Activated CD4-positive, alpha-beta memory T cell treated with anti-CD3 and anti-CD28 coated beads for 36 hours (primary cell): ENCODE measurements at regions of chr11 and their contacts with region 1.

Region 1: GRCh38 chr11:14655435-14655834 is 11.8 kb downstream of the PDE3B start:
- DNase-seq: no peak
- H3K4me3 Mint-ChIP-seq: no peak overlapping the region
- H3K27ac Mint-ChIP-seq: no peak overlapping the region
- H3K4me1 Mint-ChIP-seq: peaks cover 53% of the 10 kb centered on the region
- H3K27me3 Mint-ChIP-seq: no peaks in the 10 kb centered on the region

Region 2: DNA sequence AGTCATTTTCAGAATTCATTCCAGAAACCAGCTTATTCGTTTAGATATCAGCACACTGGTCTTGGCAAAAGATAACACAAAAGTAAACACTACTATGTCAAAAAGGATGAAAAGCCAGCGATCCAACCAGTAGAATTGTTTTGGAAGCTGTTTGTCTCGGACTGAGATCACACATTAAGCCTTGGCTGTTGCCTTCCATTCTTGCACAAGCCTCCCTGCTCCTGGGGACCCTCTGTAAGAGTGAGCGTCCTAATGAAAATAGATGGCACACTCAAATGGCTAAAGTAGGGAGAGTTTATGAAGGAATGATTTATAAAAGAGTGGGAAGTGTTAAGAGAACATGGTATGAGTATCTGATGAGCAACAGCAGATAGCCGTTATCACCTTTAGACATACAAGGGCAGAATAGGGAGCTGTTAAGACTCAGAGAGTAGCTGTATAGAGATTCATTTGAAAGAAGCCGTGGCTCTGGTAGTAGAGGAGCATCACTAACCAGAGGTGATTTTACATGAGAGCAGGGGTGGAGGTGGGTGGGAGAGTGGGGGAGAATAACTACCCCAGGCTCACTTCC is 13.4 kb after region 1 on chr11:
- CTCF ChIA-PET with region 1: no interaction called
- POLR2A ChIA-PET with region 1: no interaction called
- intact Hi-C with region 1: loop called (anchors 2 kb)
- DNase-seq: no peak
- H3K4me3 Mint-ChIP-seq: no peak overlapping the region
- H3K27ac Mint-ChIP-seq: peak overlapping the region; percentile 54
- H3K4me1 Mint-ChIP-seq: peaks cover 33% of the 10 kb centered on the region
- H3K27me3 Mint-ChIP-seq: no peaks in the 10 kb centered on the region

Region 3: DNA sequence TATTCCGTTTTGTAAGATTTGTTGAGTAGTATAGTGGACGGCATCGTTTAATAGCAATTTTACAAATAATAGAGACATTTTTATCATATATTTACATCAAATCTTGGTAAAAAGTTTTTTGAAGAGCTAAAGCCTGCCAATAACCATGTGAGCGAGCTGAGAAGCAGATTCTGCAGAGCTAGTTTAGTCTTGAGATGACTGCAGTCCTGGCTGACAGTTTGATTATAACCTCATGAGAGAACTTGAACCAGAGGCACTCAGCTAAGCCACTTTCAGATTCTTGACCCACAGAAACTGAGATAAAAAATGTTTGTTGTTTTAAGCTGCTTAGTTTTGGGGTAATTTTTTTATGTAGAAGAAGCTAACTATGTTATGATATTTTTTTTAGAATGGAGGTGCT is 67.1 kb after region 1 on chr11:
- CTCF ChIA-PET with region 1: no interaction called
- POLR2A ChIA-PET with region 1: no interaction called
- intact Hi-C with region 1: no loop called
- DNase-seq: no peak
- H3K4me3 Mint-ChIP-seq: no peak overlapping the region
- H3K27ac Mint-ChIP-seq: no peak overlapping the region
- H3K4me1 Mint-ChIP-seq: peaks cover 32% of the 10 kb centered on the region
- H3K27me3 Mint-ChIP-seq: no peaks in the 10 kb centered on the region